Right lobe of liver (tissue), 6 donors: ENCODE measurements at regions of chr1 and their contacts with region 1.

Region 1: GRCh38 chr1:26363549-26364448 is 8.8 kb downstream of the ZNF683 start:
- DNase-seq: peak; percentile 82 to 87 (median 83)
- ATAC-seq: peak; percentile 67 to 81 (median 78)
- H3K4me3 ChIP-seq: no peak overlapping the region
- H3K27ac ChIP-seq: no peak overlapping the region
- H3K4me1 ChIP-seq: peaks cover 0 to 7% (median 3%) of the 10 kb centered on the region in 4 donors
- H3K27me3 ChIP-seq: no peaks in the 10 kb centered on the region
- CTCF ChIP-seq: peak; percentile 83 to 95 (median 92)
- POLR2A ChIP-seq: no peak

Region 2: DNA sequence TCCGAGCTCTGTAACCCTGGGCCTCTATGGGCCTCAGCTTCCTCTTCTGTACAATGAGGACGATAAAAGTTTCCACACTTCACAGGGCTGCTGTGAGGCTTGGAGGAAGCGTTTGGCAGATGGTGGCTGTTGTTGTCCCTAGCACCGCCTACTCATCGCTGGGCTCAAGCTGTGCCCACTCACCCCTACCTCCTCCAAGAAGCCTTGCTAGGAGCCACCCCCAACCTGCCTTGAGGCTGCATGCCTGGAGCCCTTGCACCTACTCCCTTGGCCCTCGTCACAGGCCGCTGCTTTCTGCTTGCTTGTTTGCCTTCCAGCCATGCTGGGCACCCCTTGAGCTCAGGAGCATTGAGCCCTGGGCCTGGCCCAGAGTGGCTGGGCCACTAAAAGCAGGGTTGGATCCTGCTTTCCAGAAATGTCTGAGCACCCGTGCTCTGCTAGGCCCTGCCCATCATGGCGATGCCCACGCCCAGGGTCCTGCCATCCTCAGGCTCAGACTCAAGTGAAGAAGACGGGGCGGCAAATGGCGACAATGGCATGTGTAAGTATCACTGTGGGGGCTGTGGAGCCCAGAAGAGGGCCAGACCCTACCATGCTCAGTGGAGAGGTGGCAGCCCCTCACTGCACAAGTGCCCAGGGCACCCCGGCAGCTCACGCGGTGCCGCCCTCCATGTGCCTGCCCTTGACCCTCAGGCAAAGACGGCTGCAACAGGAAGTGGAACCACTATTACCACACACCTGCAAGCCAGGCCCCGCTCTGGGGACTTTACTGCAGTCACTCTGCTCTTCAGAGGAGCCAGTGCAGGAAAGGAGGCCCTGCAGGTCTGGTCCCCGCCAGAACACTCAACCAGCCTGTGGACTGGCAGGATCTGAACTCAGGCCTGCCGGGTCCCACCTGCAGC is 74.4 kb before region 1 on chr1:
- intact Hi-C with region 1: loop called (anchors 10 kb)
- DNase-seq: peak in 2 of 3 donors; percentile 48
- ATAC-seq: peak; percentile 19 to 33 (median 27)
- H3K4me3 ChIP-seq: no peak overlapping the region
- H3K27ac ChIP-seq: peak overlapping the region; percentile 20 to 53 (median 31)
- H3K4me1 ChIP-seq: peaks cover 0 to 9% (median 0%) of the 10 kb centered on the region in 4 donors
- H3K27me3 ChIP-seq: no peaks in the 10 kb centered on the region
- CTCF ChIP-seq: no peak
- POLR2A ChIP-seq: no peak